ENCODE measurements at regions of chr11 and their contacts with region 1.

Region 1: DNA sequence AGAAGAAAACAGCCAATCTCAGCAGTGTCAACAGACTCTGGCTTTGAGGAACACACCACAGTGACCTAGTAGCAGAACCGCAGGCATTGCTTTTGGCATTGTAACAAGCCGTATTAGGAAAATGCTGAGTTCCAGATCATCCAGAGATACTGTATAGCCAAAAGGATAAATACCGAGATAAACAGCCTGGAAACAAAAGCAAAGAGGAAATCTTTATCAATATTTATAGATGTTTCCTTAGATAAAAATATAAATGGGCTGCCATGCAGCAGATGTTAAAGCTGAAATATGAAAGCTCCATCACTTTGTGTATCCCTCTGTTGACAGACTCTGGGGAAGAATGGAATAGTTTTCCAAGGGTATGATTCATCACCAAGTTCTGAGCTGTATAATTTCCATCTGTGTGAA is 98.9 kb upstream of the TP53AIP1 start:
- DNase-seq: peak; percentile 38
- ATAC-seq: peak; percentile 83
- H3K4me3 ChIP-seq: no peak overlapping the region
- H3K27ac ChIP-seq: peak overlapping the region; percentile 88
- H3K4me1 ChIP-seq: peaks cover 25% of the 10 kb centered on the region
- H3K27me3 ChIP-seq: no peaks in the 10 kb centered on the region
- CTCF ChIP-seq: no peak

Region 2: GRCh38 chr11:129006161-129006560 is 35.5 kb before region 1 on chr11:
- CTCF ChIA-PET with region 1: no interaction called
- POLR2A ChIA-PET with region 1: no interaction called
- in situ Hi-C with region 1: loop called (anchors 5 kb)
- intact Hi-C with region 1: no loop called
- DNase-seq: no peak
- ATAC-seq: no peak
- H3K4me3 ChIP-seq: no peak overlapping the region
- H3K27ac ChIP-seq: no peak overlapping the region
- H3K4me1 ChIP-seq: no peaks in the 10 kb centered on the region
- H3K27me3 ChIP-seq: no peaks in the 10 kb centered on the region
- CTCF ChIP-seq: no peak